ENCODE measurements at regions of chr1 and their contacts with region 1.

Region 1: DNA sequence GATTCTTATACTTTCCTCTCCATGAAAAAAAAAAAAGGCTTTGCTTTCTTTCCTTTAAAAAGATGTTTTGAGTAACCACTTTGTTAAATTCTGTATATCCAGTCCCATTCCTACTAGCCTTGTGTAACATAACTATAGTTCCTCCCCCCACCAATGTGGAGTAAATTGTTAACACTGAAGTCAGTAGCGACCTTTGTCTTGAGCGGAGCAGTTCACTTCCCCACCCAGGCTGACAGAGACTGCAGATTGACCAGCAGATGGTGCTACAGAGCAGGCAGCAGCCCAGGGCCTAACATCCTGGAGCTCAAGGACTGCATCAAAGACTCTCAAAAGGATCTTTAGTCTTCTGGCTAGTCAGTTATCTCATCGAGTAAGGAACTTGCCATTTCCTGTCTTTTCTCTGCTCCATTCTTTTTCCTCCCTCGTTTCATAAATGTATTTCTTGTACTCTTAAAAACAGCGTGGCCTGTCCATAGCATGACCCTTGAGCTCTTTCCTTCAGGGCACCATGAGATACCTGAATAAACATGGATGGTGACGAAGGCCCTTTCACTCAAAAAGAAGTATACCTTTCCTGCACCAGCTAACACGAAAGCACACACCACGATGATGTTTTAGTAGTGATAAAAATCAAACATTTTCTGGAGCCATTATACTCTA is 503.5 kb upstream of the PKN2 start:
- DNase-seq: peak; percentile 84 to 89
- H3K4me3 ChIP-seq: no peak overlapping the region
- H3K4me1 ChIP-seq: peaks cover 55% of the 10 kb centered on the region
- H3K27me3 ChIP-seq: no peaks in the 10 kb centered on the region

Region 2: GRCh38 chr1:87942165-87942564 is 238.4 kb before region 1 on chr1:
- in situ Hi-C with region 1: no loop called
- DNase-seq: no peak
- H3K4me3 ChIP-seq: no peak overlapping the region
- H3K4me1 ChIP-seq: no peaks in the 10 kb centered on the region
- H3K27me3 ChIP-seq: no peaks in the 10 kb centered on the region

Region 3: DNA sequence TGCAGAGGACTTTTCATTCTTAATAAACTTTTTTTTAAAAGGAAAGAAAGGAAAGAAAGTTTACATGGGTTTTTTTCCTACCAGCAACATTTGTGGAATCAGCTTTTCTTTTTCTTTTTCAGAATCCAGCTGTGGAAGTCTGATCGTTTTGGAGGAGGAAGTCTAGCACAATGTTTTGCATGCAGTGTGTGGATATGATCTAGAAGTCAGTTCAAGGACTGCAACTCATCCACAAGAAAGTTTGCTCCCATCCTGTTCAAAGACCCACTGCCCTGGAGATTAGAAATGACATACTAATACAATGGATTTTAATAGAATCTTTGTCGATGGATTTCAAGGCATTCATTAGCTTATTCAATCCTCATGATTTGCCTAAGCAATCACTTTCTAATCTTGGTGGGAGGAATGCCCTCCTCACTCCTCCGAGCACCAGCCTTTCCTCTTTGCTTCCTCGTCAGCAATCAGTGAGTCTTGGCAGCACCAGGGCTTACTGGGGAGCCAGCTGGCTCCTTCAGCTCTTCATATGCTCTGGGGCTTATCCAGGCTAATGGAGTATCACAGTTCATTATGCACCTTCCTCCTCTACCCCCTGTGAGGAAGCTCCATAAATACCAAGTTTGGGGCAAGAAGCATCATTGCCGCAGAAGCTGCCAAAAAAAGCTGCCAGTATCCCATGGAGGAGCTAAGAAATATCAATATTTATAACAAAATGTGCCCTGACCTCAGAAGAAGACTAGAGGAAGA is 111.2 kb after region 1 on chr1:
- in situ Hi-C with region 1: loop called (anchors 5 kb)
- DNase-seq: no peak
- H3K4me3 ChIP-seq: no peak overlapping the region
- H3K4me1 ChIP-seq: peaks cover 52% of the 10 kb centered on the region
- H3K27me3 ChIP-seq: no peaks in the 10 kb centered on the region

Region 4: DNA sequence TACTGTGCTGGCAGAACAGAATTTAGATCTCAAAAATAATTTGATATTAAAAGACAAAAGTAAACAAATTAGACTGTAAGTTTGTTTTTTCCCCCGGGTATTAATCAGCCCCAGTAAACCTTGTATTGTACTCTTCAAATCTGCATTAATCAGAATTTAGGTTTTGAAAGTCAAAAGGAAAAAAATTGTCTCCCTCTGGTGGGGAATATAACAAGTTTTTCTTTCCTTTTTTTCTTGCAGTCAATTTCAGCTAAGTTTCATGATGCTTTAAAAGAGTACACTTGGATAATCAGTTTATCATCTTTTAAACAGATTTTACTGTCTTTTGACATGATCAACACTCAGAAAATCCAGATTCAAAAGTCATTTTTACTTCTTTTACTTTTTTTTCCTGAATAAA is 369.0 kb after region 1 on chr1:
- in situ Hi-C with region 1: loop called (anchors 25 kb)
- DNase-seq: peak in 1 of 2 experiments; percentile 67
- H3K4me3 ChIP-seq: no peak overlapping the region
- H3K4me1 ChIP-seq: peaks cover 8% of the 10 kb centered on the region
- H3K27me3 ChIP-seq: no peaks in the 10 kb centered on the region

Measured in HAP-1 (cell line).